ENCODE measurements at regions of chr22 and their contacts with region 1.

Region 1: GRCh38 chr22:38114484-38115398 is 4.3 kb upstream of the BAIAP2L2 start:
- DNase-seq: peak; percentile 86
- H3K4me3 Mint-ChIP-seq: no peak overlapping the region
- H3K27ac Mint-ChIP-seq: no peak overlapping the region
- H3K4me1 Mint-ChIP-seq: peaks cover 3% of the 10 kb centered on the region
- H3K27me3 Mint-ChIP-seq: no peaks in the 10 kb centered on the region

Region 2: DNA sequence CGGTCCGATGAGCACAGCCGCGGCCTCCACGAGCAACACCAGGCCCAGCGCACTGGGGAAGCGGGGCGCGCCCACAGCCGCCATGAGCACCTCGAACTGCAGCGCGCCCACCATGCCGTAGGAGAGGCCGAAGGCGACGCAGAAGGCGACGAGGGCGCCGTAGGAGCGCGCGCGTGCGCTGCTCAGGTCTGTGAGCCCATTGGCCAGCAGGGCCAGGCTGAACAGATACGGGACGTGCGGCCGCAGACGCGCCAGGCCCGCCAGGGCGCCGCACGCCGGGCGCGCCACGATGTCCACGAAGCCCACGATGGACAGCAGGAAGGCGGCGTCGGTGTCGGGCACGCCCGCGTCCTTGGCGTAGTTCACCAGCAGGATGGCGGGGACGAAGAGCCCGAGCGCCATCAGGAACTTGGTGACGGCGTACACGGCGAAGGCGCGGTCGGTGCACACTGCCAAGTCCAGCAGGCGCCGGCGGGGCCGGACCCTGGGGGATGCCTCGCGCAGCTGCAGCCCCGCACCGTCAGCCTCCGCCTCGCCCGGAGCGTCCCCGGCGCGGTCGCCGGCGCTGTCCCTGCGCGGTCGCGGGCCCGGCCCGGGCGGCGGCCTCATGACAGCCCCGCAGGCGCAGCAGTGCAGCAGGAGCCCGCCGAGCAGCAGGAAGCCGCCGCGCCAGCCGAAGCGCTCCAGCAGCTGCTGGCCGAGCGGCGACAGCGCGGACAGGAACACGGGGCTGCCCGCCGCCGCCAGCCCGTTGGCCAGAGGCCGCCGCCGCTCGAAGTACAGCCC is 33.7 kb before region 1 on chr22:
- CTCF ChIA-PET with region 1: no interaction called
- DNase-seq: peak; percentile 29
- H3K4me3 Mint-ChIP-seq: no peak overlapping the region
- H3K27ac Mint-ChIP-seq: no peak overlapping the region
- H3K4me1 Mint-ChIP-seq: no peaks in the 10 kb centered on the region
- H3K27me3 Mint-ChIP-seq: peaks cover 70% of the 10 kb centered on the region

Region 3: GRCh38 chr22:38211556-38211955 is 96.8 kb after region 1 on chr22:
- CTCF ChIA-PET with region 1: interaction called, 10 read pairs
- DNase-seq: no peak
- H3K4me3 Mint-ChIP-seq: no peak overlapping the region
- H3K27ac Mint-ChIP-seq: no peak overlapping the region
- H3K4me1 Mint-ChIP-seq: peaks cover 27% of the 10 kb centered on the region
- H3K27me3 Mint-ChIP-seq: peaks cover 15% of the 10 kb centered on the region

Region 4: DNA sequence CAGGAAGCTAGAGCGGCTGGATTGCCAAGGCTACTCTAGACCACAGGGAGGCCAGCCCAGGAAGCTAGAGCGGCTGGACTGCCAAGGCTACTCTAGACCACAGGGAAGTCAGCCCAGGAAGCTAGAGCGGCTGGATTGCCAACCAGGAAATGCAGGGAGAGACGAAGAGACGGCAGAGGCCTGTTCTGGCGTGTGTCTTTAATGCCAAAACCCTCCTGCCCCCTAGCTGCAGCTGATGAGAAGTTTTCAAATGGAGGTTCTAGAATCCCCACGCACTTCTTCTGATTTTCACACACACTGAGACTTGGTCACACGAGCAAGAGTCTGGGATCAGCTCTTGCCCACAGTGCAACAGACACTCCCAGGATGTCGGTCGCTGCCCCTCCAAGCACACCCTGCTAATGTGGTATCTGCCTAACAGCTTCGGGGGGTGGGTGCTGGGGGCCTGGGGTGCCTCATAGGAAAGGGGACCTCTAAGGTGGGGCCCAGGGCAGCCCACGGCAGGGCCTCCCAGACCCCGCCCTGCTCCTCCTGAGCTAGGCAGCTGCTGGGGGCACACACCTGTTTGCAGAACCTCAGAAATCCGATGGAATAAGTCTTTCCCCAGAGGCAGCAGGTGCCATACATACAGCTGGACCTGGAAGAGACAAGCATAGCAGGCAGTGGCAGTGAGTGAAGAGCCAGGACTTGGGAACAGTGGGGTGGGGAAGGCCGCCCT is 115.5 kb after region 1 on chr22:
- CTCF ChIA-PET with region 1: interaction called, 40 read pairs
- DNase-seq: peak; percentile 63
- H3K4me3 Mint-ChIP-seq: no peak overlapping the region
- H3K27ac Mint-ChIP-seq: no peak overlapping the region
- H3K4me1 Mint-ChIP-seq: peaks cover 12% of the 10 kb centered on the region
- H3K27me3 Mint-ChIP-seq: no peaks in the 10 kb centered on the region